MCF 10A (cell line): ENCODE measurements at regions of chr17 and their contacts with region 1.

Region 1: GRCh38 chr17:75131280-75132017 is at the start of gene NT5C:
- DNase-seq: peak; percentile 72
- H3K4me3 Mint-ChIP-seq: peak within 1 kb of the TSS; percentile 84
- H3K27ac Mint-ChIP-seq: peak within 1 kb of the TSS; percentile 63
- H3K4me1 Mint-ChIP-seq: peaks cover 7% of the 10 kb centered on the region
- H3K27me3 Mint-ChIP-seq: no peaks in the 10 kb centered on the region
- CTCF ChIP-seq: peak; percentile 79
- total RNA-seq, gene NT5C: 105 and 113 TPM in 2 replicates

Region 2: GRCh38 chr17:75039238-75039637 is 92.2 kb before region 1 on chr17:
- CTCF ChIA-PET with region 1: no interaction called
- POLR2A ChIA-PET with region 1: no interaction called
- intact Hi-C with region 1: no loop called
- DNase-seq: no peak
- H3K4me3 Mint-ChIP-seq: no peak overlapping the region
- H3K27ac Mint-ChIP-seq: no peak overlapping the region
- H3K4me1 Mint-ChIP-seq: no peaks in the 10 kb centered on the region
- H3K27me3 Mint-ChIP-seq: no peaks in the 10 kb centered on the region
- CTCF ChIP-seq: no peak

Region 3: GRCh38 chr17:75059369-75060345 is 71.8 kb before region 1 on chr17:
- CTCF ChIA-PET with region 1: interaction called, 23 read pairs
- POLR2A ChIA-PET with region 1: interaction called, 3 read pairs
- intact Hi-C with region 1: no loop called
- DNase-seq: no peak
- H3K4me3 Mint-ChIP-seq: no peak overlapping the region
- H3K27ac Mint-ChIP-seq: no peak overlapping the region
- H3K4me1 Mint-ChIP-seq: no peaks in the 10 kb centered on the region
- H3K27me3 Mint-ChIP-seq: no peaks in the 10 kb centered on the region
- CTCF ChIP-seq: peak; percentile 30

Region 4: DNA sequence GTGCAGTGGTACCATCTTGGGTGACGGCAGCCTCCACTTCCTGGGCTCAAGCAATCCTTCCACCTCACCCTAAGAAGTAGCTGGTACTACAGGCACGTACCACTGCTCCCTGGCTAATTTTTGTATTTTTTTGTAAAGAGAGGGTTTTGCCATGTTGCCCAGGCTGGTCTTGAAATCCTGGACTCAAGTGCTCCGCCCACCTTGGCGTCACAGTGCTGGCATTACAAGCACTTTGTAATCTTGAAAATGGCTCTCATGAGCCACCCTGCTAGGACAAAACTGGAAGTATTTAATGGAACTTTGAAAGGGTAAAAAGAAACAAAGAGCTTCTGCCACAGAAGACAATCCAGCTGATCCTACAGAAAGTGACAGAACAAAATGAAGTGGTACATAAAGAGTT is 42.1 kb after region 1 on chr17:
- CTCF ChIA-PET with region 1: interaction called, 15 read pairs
- POLR2A ChIA-PET with region 1: interaction called, 5 read pairs
- intact Hi-C with region 1: loop called (anchors 1 kb)
- DNase-seq: no peak
- H3K4me3 Mint-ChIP-seq: no peak overlapping the region
- H3K27ac Mint-ChIP-seq: peak overlapping the region; percentile 75
- H3K4me1 Mint-ChIP-seq: no peaks in the 10 kb centered on the region
- H3K27me3 Mint-ChIP-seq: no peaks in the 10 kb centered on the region
- CTCF ChIP-seq: no peak